Keratinocyte (primary cell): ENCODE measurements at regions of chr1 and their contacts with region 1.

Region 1: DNA sequence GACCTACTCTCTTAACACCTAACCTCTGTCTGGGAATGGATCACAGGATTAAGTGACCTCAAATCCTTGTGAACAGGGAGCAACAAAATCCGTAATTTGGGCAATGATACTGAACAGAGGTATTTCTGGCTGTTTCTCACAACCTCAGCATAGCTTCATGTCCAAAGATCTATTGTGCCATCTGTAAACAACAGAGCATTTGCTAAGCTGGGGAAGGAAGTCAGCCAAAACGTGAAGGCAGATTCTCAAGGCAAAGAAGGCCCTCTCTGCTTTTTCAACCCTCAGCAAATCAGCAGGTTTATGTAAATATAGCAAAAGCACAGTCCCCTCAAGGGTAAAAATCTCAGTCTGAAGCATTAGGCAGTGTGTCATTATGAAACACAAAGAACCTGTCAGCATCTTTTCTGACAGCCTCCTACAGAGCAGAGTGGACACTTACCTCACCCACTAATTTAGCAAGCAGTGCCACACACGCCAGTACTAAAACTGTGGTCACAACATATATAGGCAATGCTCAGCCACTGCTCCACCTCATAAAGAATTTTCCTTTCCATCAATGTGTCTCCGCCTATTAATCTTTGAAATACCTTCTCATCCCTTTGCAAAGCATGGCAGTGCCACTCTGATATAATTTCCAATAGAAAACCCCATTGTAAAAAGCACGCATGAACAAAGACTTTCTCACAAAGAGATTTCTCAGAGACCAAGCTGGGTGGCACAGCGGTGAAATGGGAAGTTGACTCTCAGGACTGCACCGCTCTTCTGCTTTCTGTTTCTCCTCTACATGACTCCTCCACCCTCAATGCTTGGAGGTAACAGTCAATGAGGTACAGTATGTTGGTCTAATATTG is 188.0 kb downstream of the RERE start:
- DNase-seq: no peak
- H3K4me3 ChIP-seq: no peak overlapping the region
- H3K27ac ChIP-seq: no peak overlapping the region
- H3K4me1 ChIP-seq: peaks cover 12% of the 10 kb centered on the region
- H3K27me3 ChIP-seq: no peaks in the 10 kb centered on the region
- CTCF ChIP-seq: no peak

Region 2: GRCh38 chr1:8525558-8526275 is 103.7 kb before region 1 on chr1:
- dilution Hi-C with region 1: no loop called
- DNase-seq: peak; percentile 44
- H3K4me3 ChIP-seq: peak overlapping the region; percentile 39 to 88 (median 72)
- H3K27ac ChIP-seq: peak overlapping the region; percentile 87
- H3K4me1 ChIP-seq: peaks cover 39% of the 10 kb centered on the region
- H3K27me3 ChIP-seq: no peaks in the 10 kb centered on the region
- CTCF ChIP-seq: no peak

Region 3: GRCh38 chr1:8540261-8540941 is 89.1 kb before region 1 on chr1:
- dilution Hi-C with region 1: no loop called
- DNase-seq: no peak
- H3K4me3 ChIP-seq: no peak overlapping the region
- H3K27ac ChIP-seq: peak overlapping the region; percentile 91
- H3K4me1 ChIP-seq: peaks cover 26% of the 10 kb centered on the region
- H3K27me3 ChIP-seq: no peaks in the 10 kb centered on the region
- CTCF ChIP-seq: no peak

Region 4: GRCh38 chr1:8740034-8740449 is 110.6 kb after region 1 on chr1:
- dilution Hi-C with region 1: loop called (anchors 25 kb)
- DNase-seq: peak; percentile 52
- H3K4me3 ChIP-seq: no peak overlapping the region
- H3K27ac ChIP-seq: peak overlapping the region; percentile 81
- H3K4me1 ChIP-seq: peaks cover 9% of the 10 kb centered on the region
- H3K27me3 ChIP-seq: no peaks in the 10 kb centered on the region
- CTCF ChIP-seq: no peak